Heart left ventricle (tissue), 16 donors: ENCODE measurements at regions of chr9 and their contacts with region 1.

Region 1: GRCh38 chr9:113682297-113682771 is 193.8 kb upstream of the ZNF618 start:
- DNase-seq: peak in 4 of 5 donors; percentile 44 to 69 (median 56)
- ATAC-seq: peak; percentile 20 to 60 (median 34)
- H3K4me3 ChIP-seq: no peak overlapping the region
- H3K27ac ChIP-seq: no peak overlapping the region
- H3K4me1 ChIP-seq: peaks cover 0 to 7% (median 0%) of the 10 kb centered on the region in 12 donors
- H3K27me3 ChIP-seq: peaks cover 0 to 10% (median under 1%) of the 10 kb centered on the region in 9 donors
- CTCF ChIP-seq: peak; percentile 77 to 95 (median 89)
- POLR2A ChIP-seq: no peak

Region 2: DNA sequence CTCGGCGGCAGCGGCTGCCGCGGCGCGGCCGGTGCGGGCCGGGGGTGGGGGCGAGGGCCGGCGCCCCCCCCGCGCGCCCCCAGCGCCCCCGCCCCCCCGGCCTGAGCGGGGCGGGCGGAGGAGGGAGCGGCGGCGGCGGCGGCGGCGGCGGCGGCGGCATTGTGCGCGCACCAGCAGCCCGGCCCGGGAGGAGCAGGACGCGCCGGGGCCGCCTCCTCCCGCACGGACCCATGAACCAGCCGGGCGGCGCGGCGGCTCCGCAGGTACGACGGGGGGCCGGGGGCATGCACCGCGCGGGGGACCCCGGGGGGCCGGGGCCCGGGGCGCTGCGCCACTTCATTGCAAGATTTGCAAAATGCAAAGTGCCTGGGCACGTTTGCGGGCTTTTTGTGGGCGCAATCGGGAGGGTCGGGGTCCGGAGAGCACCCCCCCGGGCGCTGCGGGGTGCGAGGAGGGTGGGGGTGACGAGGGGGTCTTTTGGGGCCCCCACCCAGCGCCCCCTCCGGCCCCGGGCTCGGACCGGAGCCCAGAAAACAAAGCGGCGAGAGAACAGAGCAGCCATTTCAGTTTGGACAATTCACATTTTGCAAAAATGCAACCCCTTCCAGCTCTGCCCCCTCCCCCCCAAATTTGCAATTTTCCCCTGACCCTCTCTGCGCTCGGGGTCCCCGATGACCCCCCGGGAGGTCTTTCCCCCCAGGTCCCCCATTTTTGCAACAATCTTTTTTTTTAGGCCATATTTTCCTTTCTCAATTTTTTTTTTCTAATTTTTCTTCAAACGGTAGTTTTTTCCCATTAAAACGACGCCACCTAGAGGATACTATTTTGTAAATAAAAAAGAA is 194.0 kb after region 1 on chr9 and contains the start of gene ZNF618:
- intact Hi-C with region 1: loop called in 1 of 10 experiments (anchors 10 kb)
- DNase-seq: peak; percentile 24 to 73 (median 44)
- ATAC-seq: peak in 3 of 4 donors; percentile 32 to 83 (median 64)
- H3K4me3 ChIP-seq: peak within 1 kb of the TSS; percentile 71 to 97 (median 84)
- H3K27ac ChIP-seq: peak within 1 kb of the TSS in 10 of 12 donors; percentile 39 to 86 (median 66)
- H3K4me1 ChIP-seq: peaks cover 0 to 37% (median 7%) of the 10 kb centered on the region in 12 donors
- H3K27me3 ChIP-seq: no peaks in the 10 kb centered on the region
- CTCF ChIP-seq: peak; percentile 17 to 59 (median 38)
- POLR2A ChIP-seq: no peak
- total RNA-seq, gene ZNF618: 0.81 to 4.2 (median 2.0) TPM

Region 3: GRCh38 chr9:114033397-114034103 is 351.2 kb after region 1 on chr9:
- intact Hi-C with region 1: loop called in 6 of 10 experiments (anchors 2 to 5 kb)
- DNase-seq: peak in 4 of 5 donors; percentile 39 to 58 (median 46)
- ATAC-seq: peak; percentile 36 to 78 (median 72)
- H3K4me3 ChIP-seq: no peak overlapping the region
- H3K27ac ChIP-seq: no peak overlapping the region
- H3K4me1 ChIP-seq: peaks cover 0 to 5% (median 0%) of the 10 kb centered on the region in 12 donors
- H3K27me3 ChIP-seq: no peaks in the 10 kb centered on the region
- CTCF ChIP-seq: peak; percentile 39 to 77 (median 63)
- POLR2A ChIP-seq: no peak

Region 4: DNA sequence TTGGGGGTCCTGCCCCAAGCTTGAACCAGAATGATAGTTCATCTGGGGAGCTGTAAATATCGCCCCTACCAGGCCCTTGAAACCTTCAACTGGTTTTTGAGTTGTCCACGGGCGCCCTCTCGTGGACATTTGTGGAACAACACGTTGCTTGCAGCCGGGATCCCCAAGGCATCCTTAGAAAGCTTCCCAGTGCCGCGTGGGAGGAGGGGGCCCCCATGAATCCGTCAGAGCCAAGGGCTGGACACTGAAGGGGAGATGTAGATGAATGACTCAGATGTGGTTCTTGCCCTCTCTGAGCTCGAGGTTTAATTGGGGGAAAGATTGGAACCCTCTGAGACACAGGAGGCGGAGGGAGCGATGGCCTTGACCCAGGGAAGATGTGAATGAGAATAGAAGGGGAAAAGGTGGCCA is 608.7 kb after region 1 on chr9:
- intact Hi-C with region 1: loop called in 2 of 10 experiments (anchors 10 kb)
- DNase-seq: peak; percentile 46 to 83 (median 59)
- ATAC-seq: peak in 3 of 4 donors; percentile 38 to 62 (median 49)
- H3K4me3 ChIP-seq: no peak overlapping the region
- H3K27ac ChIP-seq: no peak overlapping the region
- H3K4me1 ChIP-seq: no peaks in the 10 kb centered on the region
- H3K27me3 ChIP-seq: no peaks in the 10 kb centered on the region
- CTCF ChIP-seq: peak; percentile 77 to 96 (median 93)
- POLR2A ChIP-seq: no peak

Region 5: DNA sequence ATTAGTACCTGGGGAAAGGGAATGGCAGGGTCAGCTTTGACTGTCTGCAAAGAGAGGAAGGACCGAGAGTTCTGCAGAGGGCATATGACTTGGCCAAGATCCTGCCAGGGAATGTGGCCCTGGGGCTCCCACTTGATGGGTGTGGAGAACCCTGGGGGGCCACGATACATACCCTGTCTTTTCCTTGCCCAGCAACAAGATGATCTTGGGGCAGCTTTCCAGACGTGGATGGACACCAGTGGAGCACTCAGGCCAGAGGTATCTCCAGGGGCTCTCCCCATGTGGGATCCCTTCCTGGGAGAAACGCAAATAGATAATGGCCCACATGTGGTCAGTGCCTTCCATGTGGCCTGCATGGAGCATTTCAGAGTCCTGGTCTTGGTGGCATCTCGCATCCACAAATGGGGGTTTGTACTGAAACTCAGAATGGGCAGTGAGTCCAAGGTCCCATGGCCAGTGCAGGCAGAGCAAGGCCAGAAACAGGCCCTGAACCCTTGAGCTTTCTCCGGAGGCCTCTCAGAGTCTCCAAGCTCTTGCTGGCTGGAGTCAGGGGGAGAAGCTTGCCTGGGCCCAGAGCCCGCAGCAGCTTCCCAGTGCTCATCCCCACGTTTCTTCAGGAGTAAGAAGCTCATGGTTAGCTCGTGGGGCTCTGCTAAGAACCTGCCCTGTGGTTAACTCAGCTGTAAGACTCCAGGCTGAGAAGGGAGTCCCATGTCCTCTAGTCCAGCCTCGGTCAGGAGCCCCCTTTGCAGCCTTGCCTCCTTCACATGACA is 622.3 kb after region 1 on chr9:
- intact Hi-C with region 1: loop called in 3 of 10 experiments (anchors 5 to 10 kb)
- DNase-seq: peak in 2 of 5 donors; percentile 3
- ATAC-seq: no peak
- H3K4me3 ChIP-seq: no peak overlapping the region
- H3K27ac ChIP-seq: no peak overlapping the region
- H3K4me1 ChIP-seq: peaks cover 0 to 6% (median 2%) of the 10 kb centered on the region in 12 donors
- H3K27me3 ChIP-seq: no peaks in the 10 kb centered on the region
- CTCF ChIP-seq: no peak
- POLR2A ChIP-seq: no peak